OCI-LY7 (cell line): ENCODE measurements at regions of chr3 and their contacts with region 1.

Region 1: GRCh38 chr3:47225310-47225906 is 57.2 kb downstream of the KIF9 start:
- DNase-seq: peak; percentile 53
- H3K4me3 ChIP-seq: no peak overlapping the region
- H3K27ac ChIP-seq: no peak overlapping the region
- H3K4me1 ChIP-seq: peaks cover 38% of the 10 kb centered on the region
- CTCF ChIP-seq: no peak

Region 2: GRCh38 chr3:47176582-47176981 is 48.8 kb before region 1 on chr3:
- CTCF ChIA-PET with region 1: no interaction called
- POLR2A ChIA-PET with region 1: interaction called, 3 read pairs
- intact Hi-C with region 1: loop called (anchors 5 kb)
- DNase-seq: no peak
- H3K4me3 ChIP-seq: peak overlapping the region; percentile 49
- H3K27ac ChIP-seq: peak overlapping the region; percentile 94
- H3K4me1 ChIP-seq: peaks cover 47% of the 10 kb centered on the region
- CTCF ChIP-seq: no peak